ENCODE measurements at regions of chr16 and their contacts with region 1.

Region 1: DNA sequence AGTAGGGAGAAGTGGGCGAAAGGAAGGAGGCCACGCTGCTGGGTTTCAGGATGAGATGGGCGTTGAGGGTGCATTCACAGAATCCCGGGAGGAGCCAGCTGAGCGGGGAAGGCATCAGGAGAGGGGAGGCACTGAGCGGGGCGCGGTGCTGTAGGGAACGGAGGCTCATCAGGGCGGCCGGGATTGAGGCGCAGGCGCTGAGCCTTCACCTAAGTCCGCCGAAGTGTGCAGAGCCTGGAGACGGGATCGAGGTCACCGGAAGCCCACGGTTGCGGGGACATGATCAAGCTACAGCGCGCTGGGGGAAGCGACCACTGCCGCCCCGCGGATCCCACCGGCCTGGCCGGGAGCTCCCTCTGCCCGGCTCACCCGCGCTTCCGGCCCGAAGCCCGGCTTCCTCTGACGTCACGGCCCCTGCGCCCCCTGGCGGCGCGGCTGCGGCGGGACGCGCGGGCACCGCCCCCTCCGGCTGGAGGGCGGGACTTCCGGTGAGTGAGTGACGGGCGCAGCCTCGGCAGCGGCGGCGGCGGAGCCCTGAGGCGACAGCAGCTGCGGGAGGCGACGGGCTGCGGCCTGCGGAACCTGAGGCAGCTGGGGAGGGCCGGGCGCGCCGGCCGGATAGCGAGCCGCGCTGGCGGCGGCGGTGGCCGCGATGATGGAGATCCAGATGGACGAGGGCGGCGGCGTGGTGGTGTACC is at the start of gene MAPK8IP3:
- DNase-seq: peak; percentile 87 to 100 (median 96)
- ATAC-seq: peak; percentile 82 to 83
- H3K4me3 Mint-ChIP-seq: peak within 1 kb of the TSS; percentile 94 to 100 (median 99)
- H3K27ac Mint-ChIP-seq: peak within 1 kb of the TSS; percentile 95 to 100 (median 98)
- H3K4me1 Mint-ChIP-seq: peaks cover 14 to 48% (median 38%) of the 10 kb centered on the region in 4 donors
- H3K27me3 Mint-ChIP-seq: peaks cover 0 to 1% (median 0%) of the 10 kb centered on the region in 5 donors
- polyA plus RNA-seq, gene MAPK8IP3: 0.87 to 2.8 (median 2.5) TPM

Region 2: GRCh38 chr16:1527836-1528811 is 177.7 kb before region 1 on chr16:
- POLR2A ChIA-PET with region 1: interaction called, 23 read pairs
- DNase-seq: no peak
- ATAC-seq: no peak
- H3K4me3 Mint-ChIP-seq: peak overlapping the region in 7 of 10 donors; percentile 52 to 88 (median 79)
- H3K27ac Mint-ChIP-seq: peak overlapping the region; percentile 72 to 94 (median 85)
- H3K4me1 Mint-ChIP-seq: peaks cover 11 to 52% (median 35%) of the 10 kb centered on the region in 4 donors
- H3K27me3 Mint-ChIP-seq: no peaks in the 10 kb centered on the region

Region 3: DNA sequence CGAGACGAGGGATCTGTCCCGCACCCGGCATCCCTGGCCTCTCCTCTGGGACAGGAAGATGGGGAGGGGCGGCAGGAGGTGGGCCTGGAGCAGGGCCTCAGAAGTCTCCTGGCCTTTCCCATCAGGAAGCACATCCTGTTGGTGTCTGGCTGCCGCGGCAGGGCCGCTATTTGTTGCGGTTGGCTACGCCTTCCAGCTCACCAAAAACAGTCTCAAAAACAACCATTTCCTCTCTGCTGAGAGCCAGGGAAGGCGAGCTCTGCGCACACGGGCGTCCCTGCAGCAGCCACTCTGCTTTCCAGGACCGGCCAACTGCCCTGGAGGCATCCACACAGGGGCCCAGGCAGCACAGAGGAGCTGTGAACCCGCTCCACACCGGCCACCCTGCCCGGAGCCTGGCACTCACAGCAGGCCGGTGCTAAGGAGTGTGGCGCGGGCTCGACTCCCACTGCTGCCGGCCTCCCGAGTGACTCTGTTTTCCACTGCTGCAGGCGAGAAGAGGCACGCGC is 172.3 kb before region 1 on chr16 and contains the start of gene TMEM204:
- POLR2A ChIA-PET with region 1: interaction called, 21 read pairs
- DNase-seq: peak in 8 of 10 donors; percentile 15 to 73 (median 50)
- ATAC-seq: peak; percentile 57 to 59
- H3K4me3 Mint-ChIP-seq: peak within 1 kb of the TSS; percentile 96 to 99 (median 98)
- H3K27ac Mint-ChIP-seq: peak within 1 kb of the TSS; percentile 90 to 97 (median 94)
- H3K4me1 Mint-ChIP-seq: peaks cover 25 to 54% (median 48%) of the 10 kb centered on the region in 4 donors
- H3K27me3 Mint-ChIP-seq: no peaks in the 10 kb centered on the region
- polyA plus RNA-seq, gene TMEM204: 95.9 to 135 (median 125) TPM

Region 4: DNA sequence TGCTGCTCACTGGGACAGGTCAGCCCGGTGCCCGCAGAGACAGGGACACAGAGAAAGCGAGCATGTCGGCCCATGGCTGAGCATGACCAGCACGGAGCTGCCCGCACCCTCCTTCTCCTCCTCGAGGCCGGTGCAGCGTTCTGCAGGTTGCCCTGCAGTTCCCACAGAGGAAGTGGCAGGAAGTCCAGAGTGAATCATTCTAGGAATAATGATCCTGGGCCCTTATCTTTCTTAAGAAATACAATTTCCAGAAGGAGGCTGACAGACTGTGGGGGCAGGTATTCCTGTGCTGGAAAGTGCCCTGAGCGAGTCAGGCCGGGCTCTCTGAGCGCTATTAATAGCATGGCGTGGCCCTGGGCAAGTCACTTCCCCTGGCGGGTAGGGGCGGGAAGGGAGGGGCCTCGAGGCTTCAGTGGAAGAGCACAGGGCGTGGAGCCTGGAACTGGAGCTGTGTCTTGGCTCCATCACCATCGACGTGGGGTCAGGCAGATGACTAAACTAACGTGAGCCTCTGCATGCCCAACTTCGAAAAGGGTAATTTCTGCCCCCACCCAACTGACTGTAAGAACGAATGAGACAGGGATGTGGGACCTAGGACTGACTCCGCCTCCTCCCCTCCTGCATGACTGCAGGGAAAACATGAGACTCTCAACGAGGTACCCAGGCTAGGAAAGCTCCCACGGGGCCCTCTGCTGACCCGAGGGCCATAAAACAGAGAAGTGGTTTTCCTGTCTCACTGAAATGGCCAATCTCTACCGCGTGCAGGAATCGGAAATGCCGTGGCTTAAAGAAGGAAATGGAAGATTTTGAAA is 162.5 kb before region 1 on chr16:
- POLR2A ChIA-PET with region 1: interaction called, 10 read pairs
- DNase-seq: peak in 2 of 10 donors; percentile 26 to 28
- ATAC-seq: peak; percentile 65 to 66
- H3K4me3 Mint-ChIP-seq: peak overlapping the region; percentile 59 to 84 (median 75)
- H3K27ac Mint-ChIP-seq: peak overlapping the region; percentile 47 to 92 (median 90)
- H3K4me1 Mint-ChIP-seq: peaks cover 29 to 96% (median 85%) of the 10 kb centered on the region in 4 donors
- H3K27me3 Mint-ChIP-seq: no peaks in the 10 kb centered on the region

Region 5: GRCh38 chr16:1677802-1678496 is 27.9 kb before region 1 on chr16 and contains the start of gene JPT2:
- POLR2A ChIA-PET with region 1: interaction called, 28 read pairs
- DNase-seq: peak; percentile 91 to 97 (median 92)
- ATAC-seq: peak; percentile 96 to 98
- H3K4me3 Mint-ChIP-seq: peak within 1 kb of the TSS; percentile 79 to 91 (median 86)
- H3K27ac Mint-ChIP-seq: peak within 1 kb of the TSS; percentile 56 to 93 (median 86)
- H3K4me1 Mint-ChIP-seq: peaks cover 17 to 38% (median 30%) of the 10 kb centered on the region in 4 donors
- H3K27me3 Mint-ChIP-seq: no peaks in the 10 kb centered on the region
- polyA plus RNA-seq, gene JPT2: 9.1 to 10.3 (median 9.8) TPM

Region 6: DNA sequence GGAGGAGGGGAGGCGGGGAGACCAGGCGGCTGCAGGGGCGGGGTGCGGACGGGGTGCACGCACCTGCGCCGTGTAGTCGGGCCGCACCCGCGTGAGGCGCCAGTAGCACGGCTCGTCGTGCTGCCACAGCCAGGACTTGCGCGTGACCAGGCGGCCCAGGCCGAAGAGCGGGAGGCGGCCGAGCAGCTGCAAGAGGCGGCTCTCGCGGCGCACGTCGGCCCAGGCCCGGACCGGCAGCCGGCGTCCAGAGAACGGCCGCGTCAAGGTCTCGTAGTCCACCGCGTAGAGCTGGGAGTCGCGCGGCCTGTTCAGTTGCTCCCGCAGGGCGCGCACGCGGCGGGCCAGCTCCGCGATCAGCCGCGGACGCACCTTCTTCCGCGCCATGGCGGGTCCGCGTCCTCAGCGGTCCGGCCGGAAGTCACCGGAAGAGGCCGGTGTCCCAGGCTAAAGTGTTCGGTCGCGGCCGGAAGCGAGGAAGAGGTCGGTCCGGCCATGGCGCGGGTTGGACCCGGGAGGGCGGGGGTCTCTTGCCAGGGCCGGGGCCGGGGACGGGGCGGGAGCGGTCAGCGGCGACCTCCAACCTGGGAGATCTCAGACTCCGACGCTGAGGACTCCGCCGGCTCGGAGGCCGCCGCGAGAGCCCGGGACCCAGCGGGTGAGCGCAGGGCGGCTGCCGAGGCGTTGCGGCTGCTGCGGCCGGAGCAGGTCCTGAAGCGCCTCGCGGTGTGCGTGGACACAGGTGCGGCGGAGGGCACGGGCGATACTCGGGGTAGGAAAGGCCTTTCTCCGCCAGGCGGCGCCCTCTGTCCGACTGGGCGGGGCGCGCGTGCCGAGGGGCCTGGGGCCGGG is 67.1 kb after region 1 on chr16 and contains the starts of genes EME2 and MRPS34:
- POLR2A ChIA-PET with region 1: interaction called, 32 read pairs
- DNase-seq: peak; percentile 55 to 87 (median 74)
- ATAC-seq: peak; percentile 54 to 62
- H3K4me3 Mint-ChIP-seq: peak within 1 kb of the TSS; percentile 90 to 99 (median 96)
- H3K27ac Mint-ChIP-seq: peak within 1 kb of the TSS; percentile 88 to 97 (median 95)
- H3K4me1 Mint-ChIP-seq: peaks cover 10 to 26% (median 19%) of the 10 kb centered on the region in 4 donors
- H3K27me3 Mint-ChIP-seq: no peaks in the 10 kb centered on the region
- polyA plus RNA-seq, gene EME2: 0.35 to 1.6 (median 1.1) TPM
- polyA plus RNA-seq, gene MRPS34: 113 to 145 (median 133) TPM

Region 7: DNA sequence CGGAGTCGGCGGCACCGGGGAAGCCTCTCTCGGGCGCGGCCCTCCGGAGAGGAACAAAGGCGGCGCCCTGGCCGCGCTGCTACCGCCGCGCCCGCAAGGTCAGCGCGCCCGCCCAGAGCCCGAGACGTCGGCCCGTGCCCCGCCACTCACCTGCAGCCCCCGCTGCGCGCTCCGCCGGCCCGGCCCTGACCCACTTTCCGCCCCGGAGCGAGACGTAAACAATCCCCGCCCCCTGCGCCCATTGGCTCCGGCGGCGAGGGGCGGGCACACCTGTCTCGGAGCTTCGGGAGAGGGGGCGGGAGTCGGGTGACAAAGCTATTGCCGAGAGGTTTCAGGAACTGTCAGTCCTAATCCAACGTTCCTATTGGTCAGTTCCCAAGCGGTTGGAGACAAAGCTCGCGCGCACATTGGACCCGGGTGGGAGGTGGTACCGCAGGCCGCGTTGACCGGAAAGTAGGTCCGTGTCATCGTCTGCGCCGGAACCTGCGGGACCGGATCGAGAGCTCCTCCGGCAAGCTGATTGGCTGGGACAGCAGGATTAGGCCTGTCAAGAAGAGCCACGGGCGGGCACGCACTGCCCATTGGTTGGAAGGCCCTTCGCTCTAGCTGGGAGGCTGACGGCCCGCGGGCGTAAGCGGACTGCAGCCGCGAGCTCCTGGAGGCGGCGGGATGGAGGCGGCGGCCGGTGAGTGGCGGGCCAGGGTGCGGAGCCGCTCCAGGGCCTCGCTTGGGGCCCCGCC is 76.7 kb after region 1 on chr16 and contains the starts of genes NUBP2 and SPSB3:
- POLR2A ChIA-PET with region 1: interaction called, 32 read pairs
- DNase-seq: peak; percentile 90 to 99 (median 97)
- ATAC-seq: peak; percentile 86 to 87
- H3K4me3 Mint-ChIP-seq: peak within 1 kb of the TSS; percentile 83 to 97 (median 93)
- H3K27ac Mint-ChIP-seq: peak within 1 kb of the TSS; percentile 82 to 99 (median 93)
- H3K4me1 Mint-ChIP-seq: peaks cover 8 to 52% (median 27%) of the 10 kb centered on the region in 4 donors
- H3K27me3 Mint-ChIP-seq: no peaks in the 10 kb centered on the region
- polyA plus RNA-seq, gene NUBP2: 87.2 to 90.6 (median 87.3) TPM
- polyA plus RNA-seq, gene SPSB3: 38.0 to 42.0 (median 40.8) TPM

Region 8: DNA sequence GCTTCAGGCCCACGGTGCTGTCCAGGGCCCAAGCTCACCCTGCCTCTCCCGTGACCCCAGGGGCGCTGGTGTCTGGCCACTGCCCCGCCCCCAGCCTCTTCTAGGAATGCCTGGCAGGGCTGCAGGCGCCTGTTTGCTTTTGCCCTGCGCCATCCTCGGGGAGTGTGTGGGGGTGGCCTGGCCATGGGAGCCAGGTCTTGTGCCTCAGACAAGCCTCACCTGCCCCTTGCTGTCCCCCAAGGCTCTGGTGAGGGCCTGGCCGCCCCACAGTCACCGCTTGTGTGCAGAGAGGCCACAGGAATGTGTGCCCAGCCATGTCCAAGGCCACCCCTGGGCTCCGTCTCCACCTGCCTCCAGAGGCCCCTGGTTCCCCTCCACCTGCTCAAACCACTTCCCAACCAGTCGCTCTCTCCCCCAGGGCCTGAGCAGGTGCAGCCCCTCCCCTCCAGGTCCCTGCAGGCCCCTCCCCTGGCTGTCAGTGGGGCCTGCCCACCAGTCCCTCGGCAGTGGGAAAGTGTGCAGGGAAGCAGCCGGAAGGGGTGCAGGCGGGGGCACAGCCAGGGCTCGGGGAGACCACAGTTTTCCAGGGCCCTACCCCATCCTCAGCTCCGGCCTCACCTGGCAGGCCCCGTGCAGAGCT is 88.5 kb after region 1 on chr16:
- POLR2A ChIA-PET with region 1: no interaction called
- DNase-seq: peak in 1 of 10 donors; percentile 49
- ATAC-seq: no peak
- H3K4me3 Mint-ChIP-seq: no peak overlapping the region
- H3K27ac Mint-ChIP-seq: no peak overlapping the region
- H3K4me1 Mint-ChIP-seq: no peaks in the 10 kb centered on the region
- H3K27me3 Mint-ChIP-seq: no peaks in the 10 kb centered on the region

Measured in naive thymus-derived CD8-positive, alpha-beta T cell (primary cell).